GM12878 (cell line): ENCODE measurements at regions of chr3 and their contacts with region 1.

Region 1: GRCh38 chr3:52455283-52456168 is at the start of gene NISCH:
- DNase-seq: peak; percentile 30
- ATAC-seq: peak; percentile 90
- H3K4me3 ChIP-seq: peak within 1 kb of the TSS; percentile 88
- H3K27ac ChIP-seq: peak within 1 kb of the TSS; percentile 84
- H3K4me1 ChIP-seq: peaks cover 36% of the 10 kb centered on the region
- H3K27me3 ChIP-seq: no peaks in the 10 kb centered on the region
- CTCF ChIP-seq: no peak
- EP300 ChIP-seq: no peak
- POLR2A ChIP-seq: peak; percentile 98
- RAD21 ChIP-seq: no peak
- polyA plus RNA-seq, gene NISCH: 0.76 to 1.5 TPM

Region 2: DNA sequence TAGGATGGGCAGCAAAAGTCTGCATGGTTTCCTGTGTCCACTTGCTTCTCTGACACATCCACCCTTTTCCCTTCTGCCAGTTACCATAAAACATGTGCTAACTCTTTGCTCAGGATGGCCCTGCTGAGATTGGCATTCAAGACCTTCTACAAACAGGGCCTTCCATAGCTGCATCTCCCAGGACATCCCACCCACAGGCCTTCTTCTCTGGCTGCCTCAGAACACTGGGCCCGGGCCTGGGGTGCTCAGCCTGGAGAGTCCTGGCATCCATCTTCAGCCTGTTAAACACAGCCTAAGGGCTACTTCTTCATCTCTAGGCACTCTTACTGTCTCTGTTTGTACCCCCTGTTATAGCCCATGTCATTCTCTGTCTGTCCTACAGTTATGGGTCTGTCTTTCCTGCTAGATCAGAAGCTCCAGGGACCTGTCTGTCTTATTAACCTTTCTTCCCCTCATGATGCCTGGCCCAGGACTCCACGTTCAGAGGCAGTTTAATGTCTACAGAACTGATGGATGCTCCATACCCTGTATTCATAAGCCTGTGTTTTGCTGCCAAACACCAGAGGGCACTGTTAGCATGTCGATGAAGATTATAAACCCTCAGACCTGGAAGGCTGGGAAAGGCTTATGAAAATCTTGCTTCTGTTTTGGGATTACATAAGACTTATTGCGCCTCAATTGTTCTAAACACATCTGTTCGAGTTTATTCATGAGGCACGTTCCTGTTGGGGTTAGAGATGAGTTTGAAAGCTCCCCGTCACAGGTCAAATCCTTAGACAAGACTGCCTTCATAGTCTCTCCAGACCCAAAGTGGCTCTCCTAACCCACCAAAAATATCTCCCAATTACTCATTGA is 27.1 kb before region 1 on chr3:
- CTCF ChIA-PET with region 1: interaction called, 147 read pairs
- POLR2A ChIA-PET with region 1: interaction called, 3 read pairs
- RAD21 ChIA-PET with region 1: no interaction called
- SMC1A ChIA-PET with region 1: no interaction called
- in situ Hi-C with region 1: no loop called
- intact Hi-C with region 1: no loop called
- DNase-seq: no peak
- ATAC-seq: peak; percentile 95
- H3K4me3 ChIP-seq: no peak overlapping the region
- H3K27ac ChIP-seq: no peak overlapping the region
- H3K4me1 ChIP-seq: no peaks in the 10 kb centered on the region
- H3K27me3 ChIP-seq: no peaks in the 10 kb centered on the region
- CTCF ChIP-seq: peak; percentile 72 to 78 (median 77)
- EP300 ChIP-seq: no peak
- POLR2A ChIP-seq: no peak
- RAD21 ChIP-seq: peak; percentile 74

Region 3: GRCh38 chr3:52444860-52445793 is 10.4 kb before region 1 on chr3 and contains the start of gene SEMA3G:
- CTCF ChIA-PET with region 1: interaction called, 34 read pairs
- POLR2A ChIA-PET with region 1: interaction called, 4 read pairs
- RAD21 ChIA-PET with region 1: interaction called, 3 read pairs
- SMC1A ChIA-PET with region 1: interaction called, 6 read pairs
- in situ Hi-C with region 1: no loop called
- intact Hi-C with region 1: no loop called
- DNase-seq: no peak
- ATAC-seq: peak; percentile 98
- H3K4me3 ChIP-seq: no peak within 1 kb of the TSS
- H3K27ac ChIP-seq: no peak within 1 kb of the TSS
- H3K4me1 ChIP-seq: no peaks in the 10 kb centered on the region
- H3K27me3 ChIP-seq: no peaks in the 10 kb centered on the region
- CTCF ChIP-seq: peak; percentile 30 to 73 (median 52)
- EP300 ChIP-seq: no peak
- POLR2A ChIP-seq: peak; percentile 71
- RAD21 ChIP-seq: 0 out of 2 replicates have a peak, but pooled peaks have one; percentile 14
- polyA plus RNA-seq, gene SEMA3G: not detected

Region 4: GRCh38 chr3:52536369-52537164 is 81.0 kb after region 1 on chr3 and contains the start of gene UQCC5:
- CTCF ChIA-PET with region 1: interaction called, 4 read pairs
- POLR2A ChIA-PET with region 1: no interaction called
- RAD21 ChIA-PET with region 1: interaction called, 3 read pairs
- SMC1A ChIA-PET with region 1: interaction called, 3 read pairs
- in situ Hi-C with region 1: no loop called
- intact Hi-C with region 1: loop called (anchors 5 kb)
- DNase-seq: peak; percentile 95
- ATAC-seq: peak; percentile 91
- H3K4me3 ChIP-seq: peak within 1 kb of the TSS; percentile 95
- H3K27ac ChIP-seq: peak within 1 kb of the TSS; percentile 84
- H3K4me1 ChIP-seq: peaks cover 15% of the 10 kb centered on the region
- H3K27me3 ChIP-seq: no peaks in the 10 kb centered on the region
- CTCF ChIP-seq: peak in 1 of 3 experiments; percentile 22; a peak in 1 of 6 replicates
- EP300 ChIP-seq: no peak
- POLR2A ChIP-seq: peak; percentile 100
- RAD21 ChIP-seq: no peak
- polyA plus RNA-seq, gene UQCC5: 38.4 to 56.8 TPM